GM12878 (cell line): ENCODE measurements at regions of chr16 and their contacts with region 1.

Region 1: DNA sequence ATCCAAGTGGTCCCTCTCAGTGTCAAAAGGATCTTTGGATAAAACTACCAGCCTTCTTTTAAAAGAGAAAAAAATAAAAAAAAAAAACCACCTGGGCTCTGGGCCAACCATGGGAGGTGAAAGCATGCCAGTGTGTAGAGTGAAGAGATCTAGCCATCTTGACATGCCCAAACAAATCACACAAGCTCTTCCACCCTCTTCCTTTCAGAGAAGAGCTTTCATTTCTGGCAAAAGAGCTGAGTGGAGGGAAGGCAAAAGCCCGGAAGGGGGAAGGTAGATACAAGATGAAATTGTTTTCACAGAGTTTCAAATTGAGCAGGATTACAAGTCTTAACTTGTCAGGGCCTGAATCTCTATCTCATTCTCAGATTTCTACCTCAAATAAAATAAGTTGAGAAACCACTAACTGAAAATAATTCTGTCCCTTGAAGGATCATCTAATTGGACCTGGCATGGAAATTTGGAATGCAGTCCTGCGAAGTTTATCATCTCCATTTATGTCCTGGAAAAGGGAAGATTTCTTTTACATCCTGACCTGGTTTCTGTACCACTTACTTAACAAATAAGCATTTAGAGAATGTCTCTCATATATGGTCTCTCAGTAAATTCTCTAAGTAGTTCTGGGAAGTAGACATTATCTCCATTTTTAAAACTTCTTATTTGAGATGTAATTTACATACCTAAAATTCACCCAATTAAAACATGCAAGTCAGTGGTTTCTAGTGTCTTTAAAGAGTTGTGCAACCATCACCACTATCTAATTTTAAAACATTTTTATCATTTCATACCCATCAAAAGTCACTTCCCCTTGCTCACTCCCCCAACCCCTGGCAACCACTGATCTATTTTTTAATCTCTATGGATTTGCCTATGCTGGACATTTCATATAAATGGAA is 93.7 kb downstream of the TANGO6 start:
- DNase-seq: no peak
- ATAC-seq: no peak
- H3K4me3 ChIP-seq: no peak overlapping the region
- H3K27ac ChIP-seq: peak overlapping the region; percentile 9; the same call in 1 of the 2 replicates
- H3K4me1 ChIP-seq: no peaks in the 10 kb centered on the region
- H3K27me3 ChIP-seq: no peaks in the 10 kb centered on the region
- CTCF ChIP-seq: no peak
- EP300 ChIP-seq: no peak
- POLR2A ChIP-seq: no peak
- RAD21 ChIP-seq: no peak

Region 2: DNA sequence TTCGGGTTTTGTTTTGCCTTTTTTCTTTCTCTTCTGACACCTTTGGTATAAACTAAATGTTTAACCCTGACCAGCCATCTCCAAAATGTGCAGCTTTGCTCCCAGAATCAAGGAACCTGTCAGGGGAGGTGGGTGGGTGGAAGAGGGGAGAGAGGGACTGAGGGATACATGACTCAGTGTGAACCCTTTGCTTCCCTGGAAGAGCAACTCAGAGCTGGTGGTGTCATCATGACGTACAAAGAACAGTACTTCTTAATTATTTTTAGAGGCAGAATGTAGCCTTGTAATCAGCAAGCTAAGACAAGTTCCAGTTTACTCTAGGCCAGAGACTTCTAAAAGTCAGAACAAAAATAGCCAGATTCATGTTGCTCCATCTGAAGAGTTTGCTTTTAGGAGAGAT is 48.9 kb after region 1 on chr16:
- CTCF ChIA-PET with region 1: no interaction called
- POLR2A ChIA-PET with region 1: no interaction called
- RAD21 ChIA-PET with region 1: no interaction called
- SMC1A ChIA-PET with region 1: no interaction called
- in situ Hi-C with region 1: loop called (anchors 5 kb)
- intact Hi-C with region 1: no loop called
- DNase-seq: no peak
- ATAC-seq: no peak
- H3K4me3 ChIP-seq: no peak overlapping the region
- H3K27ac ChIP-seq: no peak overlapping the region
- H3K4me1 ChIP-seq: peaks cover under 1% of the 10 kb centered on the region; the same call in 1 of the 2 replicates
- H3K27me3 ChIP-seq: no peaks in the 10 kb centered on the region
- CTCF ChIP-seq: no peak
- EP300 ChIP-seq: no peak
- POLR2A ChIP-seq: no peak
- RAD21 ChIP-seq: no peak